Dorsolateral prefrontal cortex (tissue), 120 donors: ENCODE measurements at regions of chr4 and their contacts with region 1.

Region 1: GRCh38 chr4:38319456-38320342 is 344.3 kb upstream of the KLF3 start:
- DNase-seq: peak; percentile 69 to 90 (median 88)
- H3K4me3 ChIP-seq: peak overlapping the region in 53 of 59 donors; percentile 2 to 61 (median 46)
- H3K27ac ChIP-seq: peak overlapping the region in 58 of 59 donors; percentile 44 to 94 (median 85)
- H3K27me3 ChIP-seq: no peaks in the 10 kb centered on the region
- CTCF ChIP-seq: peak; percentile 86 to 99 (median 97)

Region 2: GRCh38 chr4:38154681-38155608 is 164.8 kb before region 1 on chr4:
- intact Hi-C with region 1: no loop called
- DNase-seq: no peak
- H3K4me3 ChIP-seq: no peak overlapping the region
- H3K27ac ChIP-seq: peak overlapping the region in 13 of 59 donors; percentile 14 to 74 (median 47)
- H3K27me3 ChIP-seq: no peaks in the 10 kb centered on the region
- CTCF ChIP-seq: no peak

Region 3: GRCh38 chr4:38179690-38180377 is 139.9 kb before region 1 on chr4:
- intact Hi-C with region 1: loop called (anchors 5 kb)
- DNase-seq: peak; percentile 60 to 84 (median 78)
- H3K4me3 ChIP-seq: no peak overlapping the region
- H3K27ac ChIP-seq: peak overlapping the region in 18 of 59 donors; percentile 8 to 73 (median 42)
- H3K27me3 ChIP-seq: no peaks in the 10 kb centered on the region
- CTCF ChIP-seq: peak; percentile 89 to 100 (median 96)

Region 4: GRCh38 chr4:38204339-38205035 is 115.2 kb before region 1 on chr4:
- intact Hi-C with region 1: loop called in 1 of 2 experiments (anchors 5 kb)
- DNase-seq: peak in 2 of 10 donors; percentile 40 to 59
- H3K4me3 ChIP-seq: peak overlapping the region in 1 of 59 donors; percentile 18
- H3K27ac ChIP-seq: peak overlapping the region in 56 of 59 donors; percentile 34 to 96 (median 84)
- H3K27me3 ChIP-seq: no peaks in the 10 kb centered on the region
- CTCF ChIP-seq: peak in 17 of 56 donors; percentile 10 to 49 (median 26)

Region 5: DNA sequence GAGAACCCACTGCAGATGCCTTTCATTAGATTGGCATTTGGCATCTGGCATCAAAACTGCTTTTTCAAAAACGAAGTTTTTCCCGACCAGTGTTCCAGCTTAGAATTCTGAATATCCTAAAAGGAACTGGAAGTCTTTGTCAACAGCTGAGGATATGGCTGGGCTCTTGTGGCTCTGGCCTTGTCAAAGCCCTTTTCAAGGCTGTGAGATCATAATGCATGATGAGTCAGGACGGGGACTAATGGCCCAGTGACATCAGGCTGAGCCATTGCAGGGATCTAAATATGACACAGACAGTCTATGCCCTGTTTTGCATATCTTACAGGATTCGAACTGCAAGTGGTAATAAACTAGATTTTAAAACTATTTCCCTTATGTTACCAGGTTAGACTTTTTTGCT is 53.1 kb before region 1 on chr4:
- intact Hi-C with region 1: loop called in 1 of 2 experiments (anchors 5 kb)
- DNase-seq: peak in 7 of 10 donors; percentile 62 to 85 (median 70)
- H3K4me3 ChIP-seq: no peak overlapping the region
- H3K27ac ChIP-seq: peak overlapping the region in 58 of 59 donors; percentile 0 to 94 (median 76)
- H3K27me3 ChIP-seq: no peaks in the 10 kb centered on the region
- CTCF ChIP-seq: peak in 2 of 56 donors; percentile 13 to 24

Region 6: GRCh38 chr4:38547052-38547451 is 227.4 kb after region 1 on chr4:
- intact Hi-C with region 1: no loop called
- DNase-seq: no peak
- H3K4me3 ChIP-seq: no peak overlapping the region
- H3K27ac ChIP-seq: no peak overlapping the region
- H3K27me3 ChIP-seq: no peaks in the 10 kb centered on the region
- CTCF ChIP-seq: no peak

Region 7: GRCh38 chr4:38663801-38664705 is 344.4 kb after region 1 on chr4 and contains the start of gene KLF3:
- intact Hi-C with region 1: loop called (anchors 1 to 2 kb)
- DNase-seq: peak; percentile 79 to 92 (median 88)
- H3K4me3 ChIP-seq: peak within 1 kb of the TSS; percentile 72 to 96 (median 85)
- H3K27ac ChIP-seq: peak within 1 kb of the TSS; percentile 93 to 100 (median 99)
- H3K27me3 ChIP-seq: no peaks in the 10 kb centered on the region
- CTCF ChIP-seq: peak in 6 of 56 donors; percentile 2 to 14 (median 10)
- total RNA-seq, gene KLF3: 20.0 to 55.9 (median 31.2) TPM

Region 8: DNA sequence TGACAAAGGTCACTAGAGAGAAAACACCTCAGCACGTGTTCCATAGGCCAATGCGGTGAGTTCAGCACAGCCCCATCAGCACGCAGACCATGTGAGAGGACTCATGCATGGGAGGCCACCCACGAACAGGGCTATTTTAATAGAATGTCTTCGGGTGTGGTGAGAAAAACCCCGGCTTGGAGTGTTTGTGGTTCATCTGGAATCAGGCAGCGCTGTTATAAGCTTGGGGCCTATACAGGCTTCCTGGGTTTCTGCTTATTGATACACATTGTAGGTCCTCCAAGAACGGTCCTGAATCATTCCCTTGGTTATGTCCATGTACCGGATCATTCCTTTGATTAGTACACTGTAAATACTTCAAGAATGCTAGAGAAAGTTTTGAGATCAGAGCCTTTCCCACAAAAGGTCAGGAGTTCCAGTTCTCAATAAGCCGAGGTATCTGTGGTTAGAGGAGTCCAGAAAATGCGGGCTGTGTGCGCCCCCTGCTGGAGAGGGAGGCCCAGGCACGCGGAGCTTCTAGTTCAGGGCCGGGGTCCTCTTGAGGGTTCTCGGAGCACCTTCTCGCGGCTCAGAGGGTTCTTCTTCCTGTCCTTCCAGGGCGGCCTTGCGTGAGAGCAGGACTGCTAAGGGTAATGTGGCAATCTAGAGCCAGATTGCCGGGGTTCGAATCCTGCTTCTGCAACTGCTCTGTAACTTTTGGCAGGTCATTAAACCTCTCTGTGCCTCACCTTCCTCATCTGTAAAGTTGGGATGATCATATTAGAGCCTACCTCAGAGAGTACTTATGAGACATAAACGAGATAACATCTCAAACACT is 411.3 kb after region 1 on chr4:
- intact Hi-C with region 1: loop called (anchors 2 to 5 kb)
- DNase-seq: peak; percentile 30 to 91 (median 78)
- H3K4me3 ChIP-seq: no peak overlapping the region
- H3K27ac ChIP-seq: no peak overlapping the region
- H3K27me3 ChIP-seq: no peaks in the 10 kb centered on the region
- CTCF ChIP-seq: peak; percentile 78 to 99 (median 94)